ENCODE measurements at regions of chr19 and their contacts with region 1.

Region 1: GRCh38 chr19:54115109-54116063 is at the starts of genes PRPF31 and TFPT:
- DNase-seq: peak; percentile 90 to 98 (median 95)
- ATAC-seq: peak; percentile 86
- H3K4me3 ChIP-seq: peak within 1 kb of the TSS; percentile 83
- H3K4me3 Mint-ChIP-seq: peak within 1 kb of the TSS; percentile 87
- H3K27ac ChIP-seq: peak within 1 kb of the TSS; percentile 65 to 87
- H3K27ac Mint-ChIP-seq: peak within 1 kb of the TSS; percentile 81
- H3K4me1 ChIP-seq: peaks cover 33% of the 10 kb centered on the region
- H3K4me1 Mint-ChIP-seq: peaks cover 27% of the 10 kb centered on the region
- H3K27me3 ChIP-seq: no peaks in the 10 kb centered on the region
- H3K27me3 Mint-ChIP-seq: no peaks in the 10 kb centered on the region
- CTCF ChIP-seq: no peak
- total RNA-seq, gene PRPF31: 52.9 to 55.9 TPM
- total RNA-seq, gene TFPT: 10.1 to 11.2 TPM

Region 2: GRCh38 chr19:53945441-53945840 is 169.9 kb before region 1 on chr19:
- CTCF ChIA-PET with region 1: no interaction called
- POLR2A ChIA-PET with region 1: no interaction called
- intact Hi-C with region 1: no loop called
- DNase-seq: no peak
- ATAC-seq: no peak
- H3K4me3 ChIP-seq: no peak overlapping the region
- H3K4me3 Mint-ChIP-seq: no peak overlapping the region
- H3K27ac ChIP-seq: no peak overlapping the region
- H3K27ac Mint-ChIP-seq: no peak overlapping the region
- H3K4me1 ChIP-seq: no peaks in the 10 kb centered on the region
- H3K4me1 Mint-ChIP-seq: no peaks in the 10 kb centered on the region
- H3K27me3 ChIP-seq: peaks cover 26 to 38% of the 10 kb centered on the region in 2 experiments
- H3K27me3 Mint-ChIP-seq: peaks cover 68% of the 10 kb centered on the region
- CTCF ChIP-seq: no peak

Region 3: GRCh38 chr19:53977429-53977990 is 137.9 kb before region 1 on chr19:
- CTCF ChIA-PET with region 1: no interaction called
- POLR2A ChIA-PET with region 1: no interaction called
- intact Hi-C with region 1: loop called in 1 of 2 experiments (anchors 5 kb)
- DNase-seq: peak; percentile 32 to 86 (median 54)
- ATAC-seq: peak; percentile 75
- H3K4me3 ChIP-seq: peak overlapping the region; percentile 51
- H3K4me3 Mint-ChIP-seq: peak overlapping the region; percentile 82
- H3K27ac ChIP-seq: no peak overlapping the region
- H3K27ac Mint-ChIP-seq: no peak overlapping the region
- H3K4me1 ChIP-seq: peaks cover 33% of the 10 kb centered on the region
- H3K4me1 Mint-ChIP-seq: peaks cover 38% of the 10 kb centered on the region
- H3K27me3 ChIP-seq: peaks cover 57 to 58% of the 10 kb centered on the region in 2 experiments
- H3K27me3 Mint-ChIP-seq: peaks cover 78% of the 10 kb centered on the region
- CTCF ChIP-seq: no peak

Region 4: DNA sequence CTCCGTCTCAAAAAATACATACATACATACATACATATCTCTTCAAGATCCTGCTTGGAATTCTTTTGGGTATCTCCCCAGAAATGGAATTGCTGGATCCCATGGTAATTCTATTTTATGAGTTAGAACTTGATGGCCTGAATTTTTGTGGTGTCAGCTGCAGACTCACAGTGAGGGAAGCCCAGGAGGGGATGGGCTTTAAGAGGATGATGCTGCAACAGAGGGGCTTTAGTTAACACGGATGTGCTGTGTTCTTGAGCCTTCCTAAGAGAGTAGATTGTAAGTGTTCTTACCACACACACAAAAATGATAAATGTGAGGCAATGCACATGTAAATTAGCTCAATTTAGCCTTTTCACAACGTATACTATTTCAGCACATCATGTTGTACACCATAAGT is 92.2 kb before region 1 on chr19:
- CTCF ChIA-PET with region 1: no interaction called
- POLR2A ChIA-PET with region 1: no interaction called
- intact Hi-C with region 1: no loop called
- DNase-seq: no peak
- ATAC-seq: no peak
- H3K4me3 ChIP-seq: no peak overlapping the region
- H3K4me3 Mint-ChIP-seq: no peak overlapping the region
- H3K27ac ChIP-seq: no peak overlapping the region
- H3K27ac Mint-ChIP-seq: no peak overlapping the region
- H3K4me1 ChIP-seq: peaks cover 6% of the 10 kb centered on the region
- H3K4me1 Mint-ChIP-seq: no peaks in the 10 kb centered on the region
- H3K27me3 ChIP-seq: peaks cover 10 to 22% of the 10 kb centered on the region in 2 experiments
- H3K27me3 Mint-ChIP-seq: peaks cover 48% of the 10 kb centered on the region
- CTCF ChIP-seq: no peak

Region 5: DNA sequence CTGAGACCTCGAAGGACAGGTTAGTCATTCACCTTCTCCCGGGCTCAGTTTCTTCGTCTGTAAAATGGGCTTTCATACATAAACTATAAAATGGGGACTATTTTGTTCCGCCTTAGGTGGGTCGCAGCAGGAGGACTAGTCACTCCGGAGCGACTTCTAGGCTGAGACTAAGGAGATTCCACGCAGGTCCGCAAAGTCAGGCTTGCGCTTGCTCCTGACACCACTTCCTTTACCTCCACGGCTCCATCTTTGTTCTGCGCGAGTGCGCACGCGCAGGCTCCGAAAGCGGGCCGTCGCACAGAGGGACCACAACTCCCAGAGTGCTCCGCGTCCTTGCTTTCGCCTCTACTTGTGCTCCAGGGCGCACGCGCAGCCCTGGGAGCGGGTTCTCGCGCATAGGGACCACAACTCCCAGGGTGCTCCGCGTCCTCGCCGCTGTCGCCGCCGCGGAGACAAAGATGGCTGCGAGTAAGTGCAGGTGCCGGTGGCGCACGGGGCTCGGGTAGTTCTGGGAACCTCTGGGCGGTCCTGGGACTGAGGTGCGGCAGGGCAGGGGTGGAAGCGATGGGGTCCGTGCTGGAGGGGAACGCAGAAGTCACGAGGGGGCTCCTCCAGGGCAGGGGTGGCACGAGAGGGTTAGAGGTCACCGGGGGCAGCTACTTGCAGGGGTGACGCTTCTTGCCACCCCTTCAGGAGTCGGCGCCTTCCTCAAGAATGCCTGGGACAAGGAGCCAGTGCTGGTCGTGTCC is 12.8 kb before region 1 on chr19 and contains the start of gene NDUFA3:
- CTCF ChIA-PET with region 1: no interaction called
- POLR2A ChIA-PET with region 1: interaction called, 24 read pairs
- intact Hi-C with region 1: loop called (anchors 1 kb)
- DNase-seq: peak; percentile 93 to 100 (median 98)
- ATAC-seq: peak; percentile 99
- H3K4me3 ChIP-seq: peak within 1 kb of the TSS; percentile 98
- H3K4me3 Mint-ChIP-seq: peak within 1 kb of the TSS; percentile 97
- H3K27ac ChIP-seq: peak within 1 kb of the TSS; percentile 37 to 72
- H3K27ac Mint-ChIP-seq: peak within 1 kb of the TSS; percentile 82
- H3K4me1 ChIP-seq: peaks cover 24% of the 10 kb centered on the region
- H3K4me1 Mint-ChIP-seq: peaks cover 23% of the 10 kb centered on the region
- H3K27me3 ChIP-seq: no peaks in the 10 kb centered on the region
- H3K27me3 Mint-ChIP-seq: no peaks in the 10 kb centered on the region
- CTCF ChIP-seq: no peak
- total RNA-seq, gene NDUFA3: 63.0 to 63.5 TPM

Region 6: DNA sequence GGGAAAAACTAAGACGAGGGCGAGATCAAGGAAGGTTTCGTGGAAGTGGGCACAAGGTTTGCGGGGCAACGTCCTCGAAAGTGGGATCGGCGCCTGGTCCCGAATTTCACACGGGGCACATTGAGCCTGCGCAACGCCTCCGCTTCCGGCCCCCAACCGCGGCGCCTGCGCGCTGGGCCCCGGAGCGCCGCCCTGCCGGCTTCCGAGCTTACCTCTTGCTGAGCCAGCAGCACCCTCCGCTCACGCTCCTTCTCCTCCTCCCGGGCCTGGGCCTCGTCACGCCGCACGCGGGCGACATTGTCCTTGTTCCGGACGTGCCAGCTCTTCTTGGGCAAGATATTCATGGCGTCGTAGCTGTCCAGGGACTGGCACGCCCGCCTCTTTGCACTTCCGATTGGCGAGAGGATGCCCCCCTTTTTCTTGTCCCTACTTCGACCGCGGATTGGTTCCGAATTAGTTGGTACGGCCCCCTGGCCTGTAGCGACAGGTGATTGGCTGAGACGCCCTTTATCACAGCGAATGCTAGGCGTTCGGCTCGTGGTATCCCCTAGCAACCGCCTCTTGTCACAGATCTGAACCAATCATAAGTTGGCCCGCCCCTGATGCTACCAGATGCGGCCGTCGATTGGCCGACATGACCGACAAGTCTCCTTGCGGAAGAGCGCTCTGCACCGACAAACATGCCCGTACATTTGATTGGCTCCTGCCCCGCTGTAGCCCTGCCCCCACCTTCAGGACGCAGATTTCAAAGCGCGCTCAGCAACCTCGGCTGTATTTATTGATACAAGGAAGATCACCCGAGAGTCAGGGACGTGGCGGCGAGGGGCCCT is 44.2 kb after region 1 on chr19 and contains the start of gene LENG1:
- CTCF ChIA-PET with region 1: interaction called, 5 read pairs
- POLR2A ChIA-PET with region 1: interaction called, 37 read pairs
- intact Hi-C with region 1: loop called in 1 of 2 experiments (anchors 1 kb)
- DNase-seq: peak; percentile 91 to 100 (median 98)
- ATAC-seq: peak; percentile 84
- H3K4me3 ChIP-seq: peak within 1 kb of the TSS; percentile 90
- H3K4me3 Mint-ChIP-seq: peak within 1 kb of the TSS; percentile 98
- H3K27ac ChIP-seq: peak within 1 kb of the TSS; percentile 86 to 92
- H3K27ac Mint-ChIP-seq: peak within 1 kb of the TSS; percentile 94
- H3K4me1 ChIP-seq: peaks cover 81% of the 10 kb centered on the region
- H3K4me1 Mint-ChIP-seq: peaks cover 55% of the 10 kb centered on the region
- H3K27me3 ChIP-seq: no peaks in the 10 kb centered on the region
- H3K27me3 Mint-ChIP-seq: no peaks in the 10 kb centered on the region
- CTCF ChIP-seq: no peak
- total RNA-seq, gene LENG1: 14.4 to 16.0 TPM

Region 7: DNA sequence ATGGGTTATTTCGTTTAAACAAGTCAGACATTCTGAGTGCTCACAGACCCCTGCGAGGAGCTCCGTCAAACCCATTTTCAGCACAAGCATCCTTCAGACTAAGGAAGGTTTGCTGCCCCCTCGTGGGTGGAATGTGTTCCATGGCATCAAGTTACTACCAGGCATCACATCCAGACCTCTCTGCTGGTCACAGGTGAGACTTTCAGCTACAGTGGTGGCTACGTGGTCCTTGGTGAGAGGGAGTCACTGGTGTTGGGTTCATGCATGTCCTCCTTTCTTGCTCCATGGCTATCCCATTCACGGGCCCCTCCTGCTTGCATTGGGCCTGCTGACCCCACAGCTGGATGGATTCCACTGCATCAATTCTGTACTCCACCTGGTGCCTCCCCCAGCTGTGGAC is 150.7 kb after region 1 on chr19:
- CTCF ChIA-PET with region 1: no interaction called
- POLR2A ChIA-PET with region 1: no interaction called
- intact Hi-C with region 1: no loop called
- DNase-seq: peak; percentile 42 to 76 (median 52)
- ATAC-seq: peak; percentile 59
- H3K4me3 ChIP-seq: no peak overlapping the region
- H3K4me3 Mint-ChIP-seq: no peak overlapping the region
- H3K27ac ChIP-seq: no peak overlapping the region
- H3K27ac Mint-ChIP-seq: no peak overlapping the region
- H3K4me1 ChIP-seq: no peaks in the 10 kb centered on the region
- H3K4me1 Mint-ChIP-seq: no peaks in the 10 kb centered on the region
- H3K27me3 ChIP-seq: no peaks in the 10 kb centered on the region
- H3K27me3 Mint-ChIP-seq: peaks cover 20% of the 10 kb centered on the region
- CTCF ChIP-seq: peak; percentile 74

Region 8: DNA sequence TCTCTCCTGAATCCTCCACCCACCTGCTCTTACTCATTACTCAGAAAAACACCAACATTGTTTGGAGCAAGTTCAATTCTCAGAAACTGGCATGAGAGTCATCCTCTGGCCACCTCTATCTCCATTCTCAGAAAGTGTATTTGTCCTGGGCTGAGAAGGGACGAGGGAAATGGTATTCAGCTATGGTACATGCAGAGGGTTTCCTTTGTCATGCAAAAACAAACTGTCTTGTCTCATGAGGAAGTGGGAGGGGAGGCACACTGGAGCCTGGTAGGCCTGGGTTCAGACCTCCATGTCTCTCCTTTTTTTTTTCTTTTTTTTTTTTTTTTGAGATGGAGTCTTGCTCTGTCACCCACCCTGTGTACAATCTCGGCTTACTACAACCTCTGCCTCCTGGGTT is 426.3 kb after region 1 on chr19:
- CTCF ChIA-PET with region 1: no interaction called
- POLR2A ChIA-PET with region 1: no interaction called
- intact Hi-C with region 1: no loop called
- DNase-seq: no peak
- ATAC-seq: no peak
- H3K4me3 ChIP-seq: no peak overlapping the region
- H3K4me3 Mint-ChIP-seq: no peak overlapping the region
- H3K27ac ChIP-seq: no peak overlapping the region
- H3K27ac Mint-ChIP-seq: no peak overlapping the region
- H3K4me1 ChIP-seq: no peaks in the 10 kb centered on the region
- H3K4me1 Mint-ChIP-seq: no peaks in the 10 kb centered on the region
- H3K27me3 ChIP-seq: no peaks in the 10 kb centered on the region
- H3K27me3 Mint-ChIP-seq: peaks cover 22% of the 10 kb centered on the region
- CTCF ChIP-seq: no peak